Prostate gland (tissue), 2 donors: ENCODE measurements at regions of chr9 and their contacts with region 1.

Region 1: GRCh38 chr9:89623925-89624420 is 19.2 kb downstream of the GADD45G start:
- DNase-seq: peak; percentile 27
- H3K4me3 ChIP-seq: no peak overlapping the region
- H3K27ac ChIP-seq: peak overlapping the region; percentile 72 to 76
- H3K4me1 ChIP-seq: peaks cover 22% of the 10 kb centered on the region
- H3K27me3 ChIP-seq: no peaks in the 10 kb centered on the region
- CTCF ChIP-seq: peak in 1 of 4 experiments; percentile 42
- POLR2A ChIP-seq: no peak

Region 2: GRCh38 chr9:89878687-89879086 is 254.7 kb after region 1 on chr9:
- intact Hi-C with region 1: loop called (anchors 5 kb)
- DNase-seq: peak; percentile 90
- H3K4me3 ChIP-seq: no peak overlapping the region
- H3K27ac ChIP-seq: peak overlapping the region; percentile 42 to 48
- H3K4me1 ChIP-seq: peaks cover 43% of the 10 kb centered on the region
- H3K27me3 ChIP-seq: no peaks in the 10 kb centered on the region
- CTCF ChIP-seq: no peak
- POLR2A ChIP-seq: no peak

Region 3: DNA sequence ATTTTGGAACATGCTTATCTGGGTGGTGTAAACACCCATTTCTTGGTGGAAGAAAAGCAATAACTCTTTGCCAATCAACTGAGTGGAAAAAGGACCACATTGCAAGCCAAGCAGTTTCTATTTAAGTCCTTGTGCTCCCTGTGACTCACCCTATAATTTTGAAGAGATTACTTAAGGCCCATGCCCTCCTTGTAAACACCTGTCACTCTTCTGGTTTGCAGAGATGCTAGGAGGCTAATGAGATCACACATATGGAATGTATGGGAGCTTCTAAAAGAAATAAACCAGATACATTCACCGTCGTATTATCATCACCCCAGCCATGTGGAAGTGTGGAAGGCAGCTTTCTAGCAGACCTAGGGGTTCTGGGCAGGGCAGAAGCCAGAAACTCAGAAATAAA is 317.9 kb after region 1 on chr9:
- intact Hi-C with region 1: loop called (anchors 5 kb)
- DNase-seq: no peak
- H3K4me3 ChIP-seq: no peak overlapping the region
- H3K27ac ChIP-seq: no peak overlapping the region
- H3K4me1 ChIP-seq: no peaks in the 10 kb centered on the region
- H3K27me3 ChIP-seq: no peaks in the 10 kb centered on the region
- CTCF ChIP-seq: no peak
- POLR2A ChIP-seq: no peak

Region 4: DNA sequence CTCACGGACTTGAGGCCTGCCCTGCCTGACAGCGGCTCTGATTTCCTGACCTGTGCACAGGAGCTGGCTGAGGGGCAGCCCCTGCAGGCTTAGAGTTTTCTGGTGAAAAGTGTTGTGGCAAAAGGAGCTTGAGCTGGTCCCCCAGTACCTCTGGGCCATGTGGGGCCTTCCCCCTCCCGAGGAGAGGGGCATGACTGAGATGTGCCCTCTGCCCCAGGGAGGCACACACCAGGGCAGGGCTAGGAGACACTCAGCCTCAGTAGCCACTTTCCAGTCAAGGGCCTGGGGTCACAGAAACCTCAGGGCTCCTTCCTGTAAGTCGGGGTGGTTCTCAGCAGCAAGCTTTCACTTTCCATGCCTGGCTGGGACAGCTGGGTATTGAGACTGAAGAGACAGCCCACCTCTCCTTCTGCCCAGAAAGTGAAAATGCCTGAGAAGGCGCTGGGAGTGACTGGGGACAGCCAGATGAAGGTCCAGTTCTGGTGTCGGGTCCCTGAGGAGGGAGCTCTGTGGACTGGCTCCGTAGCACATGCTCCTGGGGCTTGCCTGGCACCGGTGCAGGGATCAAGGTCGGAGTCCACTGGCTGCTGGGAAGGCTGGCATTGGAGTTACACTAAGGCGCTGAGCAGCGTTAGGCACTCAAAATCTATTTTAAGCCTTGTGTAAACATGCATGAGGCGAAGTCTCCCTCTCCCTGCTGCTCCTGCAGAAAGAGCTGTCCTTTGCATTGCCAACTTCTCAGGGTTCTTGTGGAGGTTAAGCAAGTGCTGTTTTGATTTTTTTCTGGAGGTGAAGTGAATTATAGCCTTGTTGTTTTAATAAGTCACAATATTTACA is 375.8 kb after region 1 on chr9:
- intact Hi-C with region 1: loop called (anchors 5 kb)
- DNase-seq: peak; percentile 80
- H3K4me3 ChIP-seq: no peak overlapping the region
- H3K27ac ChIP-seq: peak overlapping the region; percentile 85 to 87
- H3K4me1 ChIP-seq: peaks cover 24% of the 10 kb centered on the region
- H3K27me3 ChIP-seq: no peaks in the 10 kb centered on the region
- CTCF ChIP-seq: no peak
- POLR2A ChIP-seq: no peak